MCF 10A (cell line): ENCODE measurements at regions of chr5 and their contacts with region 1.

Region 1: GRCh38 chr5:26700759-26701384 is 337.5 kb downstream of the CDH9 start:
- DNase-seq: peak; percentile 75
- H3K4me3 Mint-ChIP-seq: no peak overlapping the region
- H3K27ac Mint-ChIP-seq: no peak overlapping the region
- H3K4me1 Mint-ChIP-seq: no peaks in the 10 kb centered on the region
- H3K27me3 Mint-ChIP-seq: no peaks in the 10 kb centered on the region
- CTCF ChIP-seq: peak; percentile 61

Region 2: DNA sequence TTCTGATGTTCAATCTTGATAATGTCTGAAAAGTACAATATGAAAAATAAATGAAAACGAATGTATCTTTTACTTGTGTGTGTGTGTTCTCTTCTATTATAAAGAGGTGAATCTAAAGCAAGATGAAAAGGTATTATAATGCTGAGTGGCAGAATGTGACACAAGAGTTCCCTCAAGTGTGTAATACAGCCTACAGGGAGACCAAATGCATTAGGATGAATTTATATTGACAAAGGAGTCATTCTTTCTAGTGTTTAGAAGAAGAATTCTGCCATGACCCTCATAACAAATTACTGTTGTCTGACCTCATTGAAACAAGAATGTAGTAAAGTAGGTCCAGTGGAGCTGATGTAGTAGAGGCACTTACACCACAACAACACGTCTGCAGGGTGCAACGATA is 937.1 kb before region 1 on chr5:
- CTCF ChIA-PET with region 1: interaction called, 5 read pairs
- POLR2A ChIA-PET with region 1: no interaction called
- intact Hi-C with region 1: loop called (anchors 2 kb)
- DNase-seq: no peak
- H3K4me3 Mint-ChIP-seq: no peak overlapping the region
- H3K27ac Mint-ChIP-seq: no peak overlapping the region
- H3K4me1 Mint-ChIP-seq: no peaks in the 10 kb centered on the region
- H3K27me3 Mint-ChIP-seq: no peaks in the 10 kb centered on the region
- CTCF ChIP-seq: no peak

Region 3: GRCh38 chr5:26791433-26791832 is 90.6 kb after region 1 on chr5:
- CTCF ChIA-PET with region 1: no interaction called
- POLR2A ChIA-PET with region 1: no interaction called
- intact Hi-C with region 1: no loop called
- DNase-seq: no peak
- H3K4me3 Mint-ChIP-seq: no peak overlapping the region
- H3K27ac Mint-ChIP-seq: no peak overlapping the region
- H3K4me1 Mint-ChIP-seq: no peaks in the 10 kb centered on the region
- H3K27me3 Mint-ChIP-seq: no peaks in the 10 kb centered on the region
- CTCF ChIP-seq: no peak